MCF 10A (cell line): ENCODE measurements at regions of chr11 and their contacts with region 1.

Region 1: DNA sequence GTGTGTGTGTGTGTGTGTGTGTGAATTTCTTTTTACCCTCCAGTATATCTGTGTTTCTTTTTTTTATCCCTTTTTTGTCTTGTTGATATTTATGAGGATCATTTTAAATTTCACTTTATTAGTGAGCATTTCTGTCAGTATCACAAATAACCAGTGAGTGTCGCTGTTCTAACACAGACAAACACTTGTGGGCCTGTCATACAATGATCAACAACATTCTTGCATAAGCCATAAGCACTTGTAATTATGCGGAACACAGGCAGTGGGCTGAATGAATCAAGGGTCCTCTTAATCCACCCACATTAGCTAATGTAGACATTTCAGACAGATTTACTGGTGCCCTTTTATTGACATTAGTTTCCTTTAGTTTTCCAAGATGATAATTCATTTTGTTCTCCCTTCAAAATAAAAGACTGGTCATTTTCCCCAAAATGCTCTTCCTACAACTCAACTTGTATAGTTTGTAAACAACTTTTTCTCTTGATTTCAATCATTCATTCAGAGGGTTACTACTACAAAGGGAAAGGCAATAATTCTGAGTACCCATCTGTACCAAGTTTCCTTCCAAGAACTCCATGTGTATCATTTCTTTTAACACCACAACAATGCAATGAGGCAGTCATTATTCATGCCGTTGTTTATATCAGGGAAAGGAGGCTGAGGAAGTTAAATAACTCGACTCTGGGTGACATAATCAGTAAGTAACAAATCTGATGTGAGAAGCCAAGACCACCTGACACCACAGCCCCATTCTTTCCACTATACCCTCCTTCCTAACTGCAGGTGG is 34.5 kb upstream of the ANO3 start:
- DNase-seq: peak; percentile 64
- H3K4me3 Mint-ChIP-seq: no peak overlapping the region
- H3K27ac Mint-ChIP-seq: peak overlapping the region; percentile 52
- H3K4me1 Mint-ChIP-seq: no peaks in the 10 kb centered on the region
- H3K27me3 Mint-ChIP-seq: peaks cover 16% of the 10 kb centered on the region
- CTCF ChIP-seq: peak; percentile 50

Region 2: DNA sequence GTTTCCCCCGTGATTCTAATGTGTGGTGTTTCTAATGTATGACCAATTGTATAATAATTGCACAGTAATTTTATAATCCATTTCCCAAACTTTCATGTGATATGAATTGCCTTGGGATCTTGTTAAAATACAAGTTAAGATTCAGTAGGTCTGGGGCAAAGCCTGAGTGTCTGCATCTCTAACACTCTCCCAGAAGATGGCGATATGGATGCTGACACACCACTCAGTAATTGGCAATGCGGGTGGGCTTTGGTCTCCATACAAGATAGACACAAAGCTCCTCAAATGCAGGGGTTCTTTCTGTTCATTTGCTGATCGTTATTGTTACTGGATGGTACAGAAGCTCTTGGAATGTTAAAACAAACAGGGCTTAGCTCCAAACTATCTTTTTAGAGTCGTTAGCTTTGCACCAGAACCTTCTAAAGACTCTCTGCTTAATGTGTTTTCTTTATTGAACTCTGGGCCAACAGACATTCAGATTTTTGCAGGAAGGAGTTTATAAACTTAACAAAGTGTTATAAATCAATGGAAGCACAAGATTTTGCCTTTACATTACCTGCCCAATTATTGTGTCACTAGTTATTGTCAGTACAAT is 10.8 kb before region 1 on chr11:
- CTCF ChIA-PET with region 1: interaction called, 23 read pairs
- POLR2A ChIA-PET with region 1: no interaction called
- intact Hi-C with region 1: no loop called
- DNase-seq: peak; percentile 31
- H3K4me3 Mint-ChIP-seq: no peak overlapping the region
- H3K27ac Mint-ChIP-seq: no peak overlapping the region
- H3K4me1 Mint-ChIP-seq: peaks cover 6% of the 10 kb centered on the region
- H3K27me3 Mint-ChIP-seq: peaks cover 18% of the 10 kb centered on the region
- CTCF ChIP-seq: peak; percentile 47

Region 3: DNA sequence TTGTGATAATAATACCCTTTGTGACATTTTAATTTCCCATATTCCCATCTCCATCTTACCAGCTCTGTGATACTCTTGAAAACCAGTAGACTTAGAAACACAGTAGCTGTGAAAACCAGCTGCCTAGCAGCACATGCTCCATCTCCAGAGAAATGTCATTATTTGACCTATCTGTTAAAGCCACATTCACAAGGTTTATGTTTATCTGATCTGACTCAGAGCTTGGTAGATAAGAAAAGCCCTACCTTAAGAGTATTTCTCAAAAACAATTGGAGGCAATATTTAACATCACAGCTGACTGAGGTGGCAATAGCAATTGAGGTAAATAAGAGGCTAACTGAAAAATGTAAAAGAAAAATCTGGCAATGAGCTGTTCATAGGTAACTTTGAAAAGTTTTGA is 26.5 kb after region 1 on chr11:
- CTCF ChIA-PET with region 1: interaction called, 16 read pairs
- POLR2A ChIA-PET with region 1: no interaction called
- intact Hi-C with region 1: no loop called
- DNase-seq: no peak
- H3K4me3 Mint-ChIP-seq: no peak overlapping the region
- H3K27ac Mint-ChIP-seq: no peak overlapping the region
- H3K4me1 Mint-ChIP-seq: no peaks in the 10 kb centered on the region
- H3K27me3 Mint-ChIP-seq: peaks cover 65% of the 10 kb centered on the region
- CTCF ChIP-seq: no peak

Region 4: DNA sequence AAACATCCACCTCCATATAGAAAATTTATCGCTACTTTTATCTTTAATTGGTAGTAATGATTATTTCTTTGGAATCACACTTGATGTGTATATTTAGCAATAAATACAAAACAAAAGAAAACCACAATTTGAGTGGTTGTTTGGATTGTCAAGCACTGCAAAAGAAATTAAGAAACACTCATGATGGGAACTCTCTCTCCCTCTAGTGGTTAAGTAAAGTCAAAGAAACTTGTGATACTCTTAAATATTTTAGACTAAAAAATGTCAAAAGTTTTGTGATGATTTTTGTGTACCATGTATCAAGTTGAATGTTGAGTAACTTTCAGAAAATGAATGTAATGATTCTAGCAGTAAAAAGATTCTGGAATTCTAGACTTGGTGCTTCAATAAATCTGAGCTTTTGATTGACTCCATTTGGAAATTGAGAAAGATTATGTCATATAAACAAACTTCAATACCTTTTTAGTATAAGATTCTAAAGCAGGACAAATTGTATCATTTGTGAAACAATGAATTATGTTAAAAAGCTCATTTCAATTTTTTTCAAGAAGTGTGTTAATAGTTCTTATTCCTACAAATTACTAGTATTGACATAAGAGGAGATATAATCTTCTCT is 253.9 kb after region 1 on chr11:
- CTCF ChIA-PET with region 1: interaction called, 6 read pairs
- POLR2A ChIA-PET with region 1: no interaction called
- intact Hi-C with region 1: loop called (anchors 1 kb)
- DNase-seq: no peak
- H3K4me3 Mint-ChIP-seq: no peak overlapping the region
- H3K27ac Mint-ChIP-seq: no peak overlapping the region
- H3K4me1 Mint-ChIP-seq: no peaks in the 10 kb centered on the region
- H3K27me3 Mint-ChIP-seq: peaks cover 28% of the 10 kb centered on the region
- CTCF ChIP-seq: peak; percentile 24

Region 5: GRCh38 chr11:26649884-26650283 is 352.5 kb after region 1 on chr11:
- CTCF ChIA-PET with region 1: interaction called, 53 read pairs
- POLR2A ChIA-PET with region 1: interaction called, 3 read pairs
- intact Hi-C with region 1: loop called (anchors 1 kb)
- DNase-seq: peak; percentile 84
- H3K4me3 Mint-ChIP-seq: no peak overlapping the region
- H3K27ac Mint-ChIP-seq: no peak overlapping the region
- H3K4me1 Mint-ChIP-seq: no peaks in the 10 kb centered on the region
- H3K27me3 Mint-ChIP-seq: peaks cover 11% of the 10 kb centered on the region
- CTCF ChIP-seq: peak; percentile 69

Region 6: DNA sequence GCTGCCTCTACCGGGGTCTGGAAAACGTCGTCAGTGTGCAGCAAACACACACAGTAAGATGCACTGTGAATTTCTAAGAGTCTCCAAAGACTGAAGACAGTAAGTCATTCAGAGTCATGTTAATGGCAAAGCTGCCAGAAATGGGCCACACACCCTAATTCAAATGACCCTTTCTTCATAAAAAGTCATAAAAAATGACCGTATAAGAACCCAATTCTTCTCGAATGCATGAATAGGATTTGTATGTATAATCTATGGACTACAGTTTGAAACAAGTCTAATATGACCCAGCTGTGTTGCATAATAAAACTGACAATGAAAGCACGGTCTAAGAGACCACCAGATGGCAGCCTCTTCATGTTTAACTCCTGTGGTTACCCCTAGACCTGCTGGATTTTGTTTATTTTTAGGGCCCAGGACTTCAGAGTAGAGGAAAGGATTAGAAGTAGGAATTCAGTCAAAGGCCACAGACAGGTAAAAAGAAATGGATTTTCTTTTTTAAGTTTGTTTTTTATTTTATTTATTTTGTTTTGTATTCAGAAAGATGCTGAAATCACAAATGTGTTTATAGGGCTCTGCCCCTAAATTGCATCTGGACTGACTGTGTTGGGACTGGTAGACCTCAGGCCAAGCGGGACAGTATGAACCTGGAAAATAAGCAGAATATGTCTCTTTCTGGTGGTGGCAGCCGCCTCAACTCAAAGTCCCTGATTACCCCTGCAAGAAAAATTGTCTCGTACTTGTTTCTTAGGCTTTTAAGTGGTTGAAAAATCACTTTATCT is 456.5 kb after region 1 on chr11:
- CTCF ChIA-PET with region 1: interaction called, 4 read pairs
- POLR2A ChIA-PET with region 1: no interaction called
- intact Hi-C with region 1: loop called (anchors 2 kb)
- DNase-seq: peak; percentile 75
- H3K4me3 Mint-ChIP-seq: no peak overlapping the region
- H3K27ac Mint-ChIP-seq: no peak overlapping the region
- H3K4me1 Mint-ChIP-seq: no peaks in the 10 kb centered on the region
- H3K27me3 Mint-ChIP-seq: no peaks in the 10 kb centered on the region
- CTCF ChIP-seq: peak; percentile 84

Region 7: DNA sequence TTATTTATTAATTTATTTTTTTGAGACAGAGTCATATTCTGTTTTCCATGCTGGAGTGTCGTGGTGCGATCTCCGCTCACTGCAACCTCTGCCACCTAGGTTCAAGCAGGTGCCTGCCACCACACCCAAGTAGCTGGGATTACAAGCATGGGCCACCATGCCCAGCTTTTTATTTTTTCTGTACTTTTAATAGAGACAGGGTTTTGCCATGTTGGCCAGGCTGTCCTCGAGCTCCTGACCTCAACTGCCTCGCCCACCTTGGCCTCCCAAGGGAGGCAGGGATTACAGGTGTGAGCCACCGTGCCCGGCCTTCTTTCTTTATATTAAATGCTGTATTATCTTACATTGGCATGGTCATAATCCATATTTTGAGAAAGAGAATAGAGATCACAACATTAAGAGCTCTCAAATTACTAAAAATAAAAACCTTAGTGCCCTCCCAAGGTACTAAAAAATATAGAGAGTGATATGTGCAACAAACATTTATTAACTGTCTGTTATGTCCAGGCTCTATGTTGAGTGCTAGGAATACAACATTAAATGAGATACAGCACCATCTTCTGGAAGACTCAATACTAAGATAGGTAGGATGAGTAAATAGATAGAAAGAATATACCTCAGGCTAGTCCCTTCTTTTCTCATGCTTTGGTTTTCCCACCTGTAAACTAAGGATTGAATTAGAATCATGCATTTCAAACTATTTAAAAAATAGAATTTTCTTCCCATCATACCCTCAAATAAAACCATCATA is 827.3 kb after region 1 on chr11:
- CTCF ChIA-PET with region 1: interaction called, 9 read pairs
- POLR2A ChIA-PET with region 1: no interaction called
- intact Hi-C with region 1: loop called (anchors 10 kb)
- DNase-seq: peak; percentile 45
- H3K4me3 Mint-ChIP-seq: no peak overlapping the region
- H3K27ac Mint-ChIP-seq: no peak overlapping the region
- H3K4me1 Mint-ChIP-seq: peaks cover 5% of the 10 kb centered on the region
- H3K27me3 Mint-ChIP-seq: no peaks in the 10 kb centered on the region
- CTCF ChIP-seq: peak; percentile 28